Activated CD4-positive, alpha-beta memory T cell treated with anti-CD3 and anti-CD28 coated beads for 36 hours (primary cell): ENCODE measurements at regions of chr11 and their contacts with region 1.

Region 1: DNA sequence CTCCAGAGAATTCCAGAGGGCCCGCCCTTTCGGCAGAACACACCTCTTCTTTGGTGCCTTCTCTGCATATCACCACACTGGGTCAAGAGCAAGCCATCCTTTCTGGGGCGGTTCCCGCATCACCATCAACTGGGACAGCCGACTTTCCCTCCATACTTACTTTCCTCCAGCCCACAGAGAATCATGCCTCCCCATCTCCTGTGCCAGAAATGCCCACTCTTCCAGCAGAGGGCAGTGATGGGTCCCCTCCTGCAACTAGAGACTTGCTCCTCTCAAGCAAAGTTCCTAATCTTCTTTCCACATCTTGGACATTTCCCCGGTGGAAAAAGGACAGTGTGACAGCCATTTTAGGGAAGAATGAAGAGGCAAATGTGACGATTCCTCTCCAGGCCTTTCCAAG is 157.7 kb downstream of the C11orf91 start:
- DNase-seq: peak; percentile 52
- H3K4me3 Mint-ChIP-seq: no peak overlapping the region
- H3K27ac Mint-ChIP-seq: no peak overlapping the region
- H3K4me1 Mint-ChIP-seq: no peaks in the 10 kb centered on the region
- H3K27me3 Mint-ChIP-seq: peaks cover 29% of the 10 kb centered on the region

Region 2: DNA sequence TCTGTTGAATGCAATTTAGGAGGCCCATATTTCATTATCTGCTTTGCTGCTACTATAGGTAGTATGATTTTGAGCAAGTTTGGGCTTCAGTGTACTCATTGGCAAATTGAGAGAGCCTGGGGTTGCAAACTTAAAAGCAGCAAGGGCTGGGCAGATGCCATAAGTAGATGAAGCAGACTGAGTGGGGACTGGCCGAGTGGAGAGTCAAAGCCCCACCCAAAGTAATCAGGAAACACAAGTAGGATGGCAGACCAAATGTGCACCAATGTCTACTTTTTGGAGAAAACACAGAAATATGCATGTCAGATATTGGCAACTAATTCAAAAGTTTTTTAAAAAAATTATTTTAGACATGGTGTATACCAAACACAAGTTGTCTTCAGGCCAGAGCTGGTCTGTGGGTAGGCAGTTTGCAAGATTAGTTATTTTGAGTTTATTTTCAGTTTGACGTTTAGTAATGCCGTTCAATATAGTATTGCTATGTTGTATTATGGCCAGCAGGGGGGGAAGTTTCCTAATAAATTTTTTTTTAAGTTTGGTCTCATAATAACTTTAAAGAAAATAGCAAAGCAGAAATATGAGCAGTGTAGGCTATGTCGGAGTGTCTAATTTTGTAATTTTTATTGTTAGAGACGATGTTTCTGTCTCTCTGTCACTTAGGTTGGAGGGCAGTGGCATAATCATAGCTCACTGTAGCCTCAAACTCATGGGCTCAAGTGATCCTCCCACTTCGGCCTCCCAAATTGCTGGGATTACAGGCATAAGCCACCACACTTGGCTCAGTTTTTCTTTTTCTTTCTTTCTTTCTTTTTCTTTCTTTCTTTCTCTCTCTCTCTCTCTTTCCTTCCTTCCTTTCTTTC is 180.6 kb before region 1 on chr11:
- CTCF ChIA-PET with region 1: no interaction called
- POLR2A ChIA-PET with region 1: no interaction called
- intact Hi-C with region 1: loop called (anchors 10 kb)
- DNase-seq: no peak
- H3K4me3 Mint-ChIP-seq: no peak overlapping the region
- H3K27ac Mint-ChIP-seq: no peak overlapping the region
- H3K4me1 Mint-ChIP-seq: peaks cover 2% of the 10 kb centered on the region
- H3K27me3 Mint-ChIP-seq: peaks cover 2% of the 10 kb centered on the region